Mammary epithelial cell (primary cell): ENCODE measurements at regions of chr16 and their contacts with region 1.

Region 1: GRCh38 chr16:7167626-7168025 is 165.0 kb upstream of the RBFOX1 start:
- DNase-seq: no peak
- H3K4me3 ChIP-seq: no peak overlapping the region
- H3K27ac ChIP-seq: no peak overlapping the region
- H3K4me1 ChIP-seq: no peaks in the 10 kb centered on the region
- H3K27me3 ChIP-seq: no peaks in the 10 kb centered on the region
- CTCF ChIP-seq: no peak

Region 2: GRCh38 chr16:7107436-7107835 is 60.2 kb before region 1 on chr16:
- CTCF ChIA-PET with region 1: no interaction called
- dilution Hi-C with region 1: loop called (anchors 5 kb)
- in situ Hi-C with region 1: no loop called
- intact Hi-C with region 1: no loop called
- DNase-seq: no peak
- H3K4me3 ChIP-seq: no peak overlapping the region
- H3K27ac ChIP-seq: no peak overlapping the region
- H3K4me1 ChIP-seq: no peaks in the 10 kb centered on the region
- H3K27me3 ChIP-seq: no peaks in the 10 kb centered on the region
- CTCF ChIP-seq: no peak

Region 3: DNA sequence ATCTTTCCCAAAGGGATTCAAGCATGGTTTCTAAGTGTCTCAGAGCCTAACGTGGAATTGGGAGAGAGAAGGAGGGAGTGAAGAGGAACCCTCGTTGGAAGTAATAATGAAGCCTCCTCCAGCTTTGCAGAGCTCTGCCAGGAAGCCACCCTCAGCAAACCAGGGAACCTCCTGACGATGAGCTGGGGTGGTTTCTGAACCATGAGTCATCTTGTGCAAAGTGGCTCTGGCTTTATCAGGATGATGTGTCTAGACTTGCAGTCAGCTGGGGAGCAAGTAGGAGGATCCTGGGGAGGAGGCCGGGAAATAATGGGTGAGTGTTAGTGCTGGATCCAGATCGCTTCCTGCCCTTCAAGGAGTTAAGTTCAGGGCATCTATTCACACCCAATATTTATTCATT is 26.7 kb before region 1 on chr16:
- CTCF ChIA-PET with region 1: no interaction called
- dilution Hi-C with region 1: no loop called
- in situ Hi-C with region 1: no loop called
- intact Hi-C with region 1: no loop called
- DNase-seq: no peak
- H3K4me3 ChIP-seq: no peak overlapping the region
- H3K27ac ChIP-seq: no peak overlapping the region
- H3K4me1 ChIP-seq: no peaks in the 10 kb centered on the region
- H3K27me3 ChIP-seq: no peaks in the 10 kb centered on the region
- CTCF ChIP-seq: no peak